Left ventricle myocardium superior (tissue), 1 donor: ENCODE measurements at regions of chr7 and their contacts with region 1.

Region 1: GRCh38 chr7:47991741-47992311 is 12.4 kb upstream of the HUS1 start:
- DNase-seq: peak; percentile 91
- ATAC-seq: peak; percentile 100

Region 2: DNA sequence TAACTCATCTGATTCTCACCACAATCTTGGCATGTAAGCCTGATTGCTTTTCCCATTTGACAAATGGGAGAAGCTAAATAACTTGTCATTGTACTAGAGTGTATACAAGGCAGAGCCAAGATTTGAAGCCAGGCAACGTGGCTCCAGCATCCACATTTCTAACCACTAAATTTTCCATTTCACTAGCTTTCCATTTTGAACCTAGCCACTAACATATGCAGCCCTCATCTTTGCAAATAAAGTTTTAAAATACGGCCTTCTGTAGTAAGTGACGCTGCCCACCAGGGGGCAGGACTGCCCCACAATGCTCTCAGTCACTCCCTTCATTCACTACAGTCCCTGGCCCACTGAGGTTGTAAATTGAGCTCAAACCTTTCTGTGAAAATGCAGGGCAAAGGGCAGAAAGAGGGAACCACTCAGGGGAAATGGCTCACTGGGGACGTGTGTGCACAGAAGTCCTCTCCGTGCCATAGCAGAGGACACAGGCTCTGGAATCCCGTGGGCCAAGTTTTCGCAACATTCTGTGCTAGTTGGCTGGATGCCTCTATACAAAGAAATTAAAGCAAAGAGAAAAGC is 725.6 kb before region 1 on chr7:
- intact Hi-C with region 1: no loop called
- DNase-seq: peak; percentile 65
- ATAC-seq: peak; percentile 88

Region 3: GRCh38 chr7:48089046-48090003 is 97.5 kb after region 1 on chr7 and contains the start of gene UPP1:
- intact Hi-C with region 1: loop called (anchors 10 kb)
- DNase-seq: peak; percentile 96
- ATAC-seq: peak; percentile 95
- total RNA-seq, gene UPP1: 20.9 TPM